HCT116 (cell line): ENCODE measurements at regions of chr17 and their contacts with region 1.

Region 1: DNA sequence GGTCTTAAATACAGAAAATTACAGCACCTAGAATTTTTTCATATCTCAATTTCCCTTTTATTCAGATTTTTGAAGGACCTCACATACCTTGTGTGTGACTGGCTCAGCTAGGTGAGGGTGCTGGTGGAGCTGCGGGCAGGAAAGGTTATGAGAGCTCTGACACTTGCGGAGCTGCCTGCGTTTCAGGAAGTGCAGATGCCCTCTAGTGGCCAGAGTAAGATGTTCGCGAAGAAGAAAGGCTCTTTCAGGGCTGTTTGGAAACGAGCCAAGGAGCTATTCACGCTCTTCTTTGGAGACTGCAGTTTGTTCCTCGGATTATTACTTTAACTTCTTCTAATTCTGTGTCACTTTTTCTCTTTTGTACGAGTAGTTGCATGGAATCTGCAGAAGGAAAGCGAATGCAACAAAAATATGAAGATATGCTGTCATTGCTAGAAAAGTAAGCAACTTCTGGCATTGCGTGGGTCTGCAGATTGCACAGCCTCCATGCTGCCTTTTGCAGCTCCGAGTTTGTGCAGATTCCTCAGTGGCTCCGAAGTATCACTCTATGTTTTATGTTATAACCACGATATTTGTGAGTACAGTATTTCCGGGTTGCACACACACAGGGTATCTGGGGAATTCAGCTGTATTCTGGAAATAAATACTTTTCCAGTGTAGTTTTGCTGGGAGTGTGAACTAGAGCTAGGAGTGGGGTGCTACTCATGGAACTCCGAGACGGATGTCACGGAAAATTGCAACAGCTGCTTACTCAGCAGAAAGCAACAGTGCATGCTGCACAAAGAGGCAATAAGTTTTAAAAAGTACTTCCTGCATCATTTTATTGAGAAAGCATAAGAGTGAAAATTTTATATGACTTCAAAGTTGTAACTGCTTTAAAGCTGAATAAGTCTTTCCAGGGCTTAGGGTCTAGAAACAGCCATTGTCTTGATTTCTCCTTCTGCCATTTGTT is 46.3 kb downstream of the DNAH9 start:
- DNase-seq: peak; percentile 60
- ATAC-seq: peak; percentile 79
- H3K4me3 ChIP-seq: no peak overlapping the region
- H3K27ac ChIP-seq: no peak overlapping the region
- H3K4me1 ChIP-seq: no peaks in the 10 kb centered on the region
- H3K27me3 ChIP-seq: no peaks in the 10 kb centered on the region
- CTCF ChIP-seq: peak; percentile 24 to 84 (median 80); a peak in 5 of 6 replicates
- POLR2A ChIP-seq: no peak
- RAD21 ChIP-seq: peak; percentile 47

Region 2: DNA sequence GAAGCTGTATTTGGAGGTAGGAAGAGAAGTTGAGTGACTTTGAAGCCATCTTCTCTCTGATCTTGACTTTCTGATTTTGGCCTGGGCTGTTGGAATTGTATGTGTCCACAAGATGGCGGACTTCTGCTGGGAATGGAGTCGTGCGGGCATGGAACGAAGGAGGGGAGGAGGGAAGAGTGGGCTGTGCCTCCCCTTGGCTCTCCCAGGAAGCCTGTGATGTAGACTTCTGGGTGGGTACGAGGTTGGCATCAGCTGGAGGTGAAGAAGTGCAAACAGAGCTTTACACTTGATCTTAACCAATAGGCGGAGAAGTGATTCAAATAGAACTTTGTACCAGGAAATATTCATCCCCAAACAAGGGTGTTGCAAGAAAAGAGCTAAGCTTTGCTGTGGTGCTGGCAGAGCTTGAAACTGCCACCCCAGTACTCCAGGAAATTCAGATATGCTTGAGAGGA is 907.3 kb before region 1 on chr17:
- CTCF ChIA-PET with region 1: no interaction called
- POLR2A ChIA-PET with region 1: no interaction called
- RAD21 ChIA-PET with region 1: no interaction called
- intact Hi-C with region 1: loop called (anchors 5 kb)
- DNase-seq: peak; percentile 39
- ATAC-seq: peak; percentile 94
- H3K4me3 ChIP-seq: no peak overlapping the region
- H3K27ac ChIP-seq: no peak overlapping the region
- H3K4me1 ChIP-seq: no peaks in the 10 kb centered on the region
- H3K27me3 ChIP-seq: peaks cover 11% of the 10 kb centered on the region; the same call in 1 of the 2 replicates
- CTCF ChIP-seq: peak; percentile 58 to 87 (median 74); a peak in 5 of 6 replicates
- POLR2A ChIP-seq: no peak
- RAD21 ChIP-seq: peak; percentile 77

Region 3: GRCh38 chr17:11682646-11683045 is 38.1 kb after region 1 on chr17:
- CTCF ChIA-PET with region 1: no interaction called
- POLR2A ChIA-PET with region 1: no interaction called
- RAD21 ChIA-PET with region 1: no interaction called
- intact Hi-C with region 1: no loop called
- DNase-seq: no peak
- ATAC-seq: no peak
- H3K4me3 ChIP-seq: no peak overlapping the region
- H3K27ac ChIP-seq: no peak overlapping the region
- H3K4me1 ChIP-seq: no peaks in the 10 kb centered on the region
- H3K27me3 ChIP-seq: no peaks in the 10 kb centered on the region
- CTCF ChIP-seq: no peak
- POLR2A ChIP-seq: no peak
- RAD21 ChIP-seq: no peak

Region 4: DNA sequence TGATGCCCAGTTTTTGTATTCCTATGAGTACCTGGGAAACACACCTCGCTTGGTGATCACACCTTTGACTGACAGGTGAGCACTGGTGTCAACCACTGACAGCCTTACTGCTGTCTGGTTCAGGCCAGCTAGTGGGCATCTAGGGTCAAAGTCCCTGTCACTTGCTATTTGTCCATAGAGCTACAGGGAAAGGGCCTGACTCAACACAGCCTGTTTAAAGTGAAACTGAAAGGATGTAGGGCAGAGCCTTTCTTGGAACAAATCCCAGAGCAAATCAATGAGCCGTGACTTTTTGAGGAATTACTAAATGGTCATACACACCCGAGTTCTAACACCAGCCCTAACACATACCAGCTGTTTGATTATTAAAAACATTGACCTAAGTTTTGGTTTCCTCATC is 60.6 kb after region 1 on chr17:
- CTCF ChIA-PET with region 1: no interaction called
- POLR2A ChIA-PET with region 1: no interaction called
- RAD21 ChIA-PET with region 1: no interaction called
- intact Hi-C with region 1: no loop called
- DNase-seq: no peak
- ATAC-seq: no peak
- H3K4me3 ChIP-seq: no peak overlapping the region
- H3K27ac ChIP-seq: no peak overlapping the region
- H3K4me1 ChIP-seq: no peaks in the 10 kb centered on the region
- H3K27me3 ChIP-seq: peaks cover 5% of the 10 kb centered on the region; the same call in 1 of the 2 replicates
- CTCF ChIP-seq: no peak
- POLR2A ChIP-seq: no peak
- RAD21 ChIP-seq: no peak

Region 5: DNA sequence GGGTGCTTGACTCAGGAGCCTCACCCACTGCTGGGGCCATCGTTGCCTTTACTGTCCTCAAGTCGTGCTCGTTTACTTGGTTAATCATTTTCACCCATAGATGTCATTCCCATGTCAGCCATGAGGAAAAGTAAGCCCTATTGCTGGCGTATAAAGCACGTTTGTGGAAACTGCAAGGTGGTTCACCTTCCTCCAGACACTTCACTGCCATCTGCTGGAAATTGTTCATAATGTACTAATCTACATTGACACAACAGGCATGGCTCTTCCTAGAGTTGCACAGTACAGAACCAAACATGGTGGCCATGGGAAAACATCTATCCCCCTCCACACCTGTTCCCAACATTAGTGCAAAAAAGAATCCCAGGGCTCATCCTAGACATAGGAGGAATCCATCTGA is 236.2 kb after region 1 on chr17:
- CTCF ChIA-PET with region 1: no interaction called
- POLR2A ChIA-PET with region 1: no interaction called
- RAD21 ChIA-PET with region 1: no interaction called
- intact Hi-C with region 1: loop called (anchors 5 kb)
- DNase-seq: peak; percentile 48
- ATAC-seq: peak; percentile 96
- H3K4me3 ChIP-seq: no peak overlapping the region
- H3K27ac ChIP-seq: no peak overlapping the region
- H3K4me1 ChIP-seq: no peaks in the 10 kb centered on the region
- H3K27me3 ChIP-seq: no peaks in the 10 kb centered on the region
- CTCF ChIP-seq: peak in 2 of 3 experiments; percentile 30 to 55; a peak in 4 of 6 replicates
- POLR2A ChIP-seq: no peak
- RAD21 ChIP-seq: peak; percentile 40; the same call in 1 of the 2 replicates

Region 6: GRCh38 chr17:11986942-11987329 is 342.4 kb after region 1 on chr17:
- CTCF ChIA-PET with region 1: interaction called, 5 read pairs
- POLR2A ChIA-PET with region 1: no interaction called
- RAD21 ChIA-PET with region 1: no interaction called
- intact Hi-C with region 1: loop called (anchors 10 kb)
- DNase-seq: peak; percentile 32
- ATAC-seq: peak; percentile 77
- H3K4me3 ChIP-seq: no peak overlapping the region
- H3K27ac ChIP-seq: no peak overlapping the region
- H3K4me1 ChIP-seq: no peaks in the 10 kb centered on the region
- H3K27me3 ChIP-seq: no peaks in the 10 kb centered on the region
- CTCF ChIP-seq: peak; percentile 37 to 62 (median 42); a peak in 5 of 6 replicates
- POLR2A ChIP-seq: no peak
- RAD21 ChIP-seq: peak; percentile 61